Caco-2 (cell line): ENCODE measurements at regions of chr11 and their contacts with region 1.

Region 1: DNA sequence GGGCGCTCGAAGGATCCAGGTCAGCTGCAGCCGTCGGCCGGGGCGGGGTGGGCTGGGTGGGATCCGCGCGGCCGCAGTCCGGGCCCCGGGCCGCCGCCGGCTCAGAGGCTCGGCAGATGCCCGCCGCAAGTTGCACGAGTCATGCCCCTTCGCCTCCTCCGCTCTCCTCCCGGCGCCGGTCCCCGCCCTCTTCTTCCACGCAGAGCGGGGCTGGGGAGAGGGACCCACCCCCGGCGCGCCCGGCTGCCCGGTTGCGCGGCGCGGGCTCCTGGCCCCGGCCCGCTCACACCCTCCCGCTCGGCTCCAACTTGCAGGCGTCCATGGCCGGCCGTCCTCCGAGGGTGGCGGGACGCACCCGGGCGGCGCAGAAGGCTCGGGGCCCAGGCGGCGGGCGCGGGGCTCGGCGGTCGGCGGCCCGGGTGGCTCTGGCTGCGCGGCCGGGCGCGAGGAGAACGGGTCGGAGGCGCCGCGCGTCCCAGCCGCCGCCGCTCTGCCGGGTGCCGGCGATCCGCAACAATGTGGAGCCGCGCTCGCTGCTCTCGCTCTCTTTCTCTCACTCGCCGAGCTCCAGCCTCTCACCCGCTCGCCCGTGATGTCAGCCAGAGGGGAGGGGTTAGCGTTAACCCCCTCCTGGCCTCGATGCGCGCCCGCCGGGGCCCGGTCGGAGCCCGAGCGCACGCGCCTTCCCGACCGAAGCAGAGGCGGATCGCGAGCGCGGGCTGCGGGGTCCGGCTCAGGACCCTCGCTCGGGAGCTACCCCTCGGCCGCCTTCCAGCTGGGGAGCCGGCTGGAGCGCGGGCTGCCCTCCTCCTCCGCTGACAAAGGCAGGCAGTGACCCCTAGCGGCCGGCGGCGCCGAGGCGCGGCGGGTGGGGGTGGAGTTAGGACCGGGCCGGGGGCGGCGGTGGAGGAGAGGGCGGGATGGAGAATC is at the start of gene NECTIN1:
- DNase-seq: peak; percentile 93 to 98
- H3K4me3 ChIP-seq: peak within 1 kb of the TSS; percentile 87
- H3K4me3 Mint-ChIP-seq: peak within 1 kb of the TSS; percentile 89
- H3K27ac Mint-ChIP-seq: peak within 1 kb of the TSS; percentile 15
- H3K4me1 ChIP-seq: peaks cover 25% of the 10 kb centered on the region
- H3K4me1 Mint-ChIP-seq: peaks cover 22% of the 10 kb centered on the region
- H3K27me3 ChIP-seq: no peaks in the 10 kb centered on the region
- H3K27me3 Mint-ChIP-seq: peaks cover 5% of the 10 kb centered on the region
- CTCF ChIP-seq: peak; percentile 99
- total RNA-seq, gene NECTIN1: 60.1 and 63.6 TPM in 2 replicates

Region 2: GRCh38 chr11:119460582-119460981 is 268.3 kb before region 1 on chr11:
- CTCF ChIA-PET with region 1: no interaction called
- POLR2A ChIA-PET with region 1: no interaction called
- intact Hi-C with region 1: no loop called
- DNase-seq: no peak
- H3K4me3 ChIP-seq: no peak overlapping the region
- H3K4me3 Mint-ChIP-seq: no peak overlapping the region
- H3K27ac Mint-ChIP-seq: no peak overlapping the region
- H3K4me1 ChIP-seq: no peaks in the 10 kb centered on the region
- H3K4me1 Mint-ChIP-seq: no peaks in the 10 kb centered on the region
- H3K27me3 ChIP-seq: no peaks in the 10 kb centered on the region
- H3K27me3 Mint-ChIP-seq: peaks cover 21% of the 10 kb centered on the region
- CTCF ChIP-seq: no peak

Region 3: GRCh38 chr11:119666463-119667131 is 62.3 kb before region 1 on chr11:
- CTCF ChIA-PET with region 1: interaction called, 32 read pairs
- POLR2A ChIA-PET with region 1: no interaction called
- intact Hi-C with region 1: loop called (anchors 1 kb)
- DNase-seq: peak; percentile 86 to 94
- H3K4me3 ChIP-seq: no peak overlapping the region
- H3K4me3 Mint-ChIP-seq: no peak overlapping the region
- H3K27ac Mint-ChIP-seq: no peak overlapping the region
- H3K4me1 ChIP-seq: peaks cover 6% of the 10 kb centered on the region; the same call in 1 of the 2 replicates
- H3K4me1 Mint-ChIP-seq: peaks cover 7% of the 10 kb centered on the region
- H3K27me3 ChIP-seq: no peaks in the 10 kb centered on the region
- H3K27me3 Mint-ChIP-seq: no peaks in the 10 kb centered on the region
- CTCF ChIP-seq: peak; percentile 99

Region 4: GRCh38 chr11:119701591-119702549 is 27.0 kb before region 1 on chr11:
- CTCF ChIA-PET with region 1: interaction called, 40 read pairs
- POLR2A ChIA-PET with region 1: no interaction called
- intact Hi-C with region 1: no loop called
- DNase-seq: no peak
- H3K4me3 ChIP-seq: no peak overlapping the region
- H3K4me3 Mint-ChIP-seq: no peak overlapping the region
- H3K27ac Mint-ChIP-seq: no peak overlapping the region
- H3K4me1 ChIP-seq: peaks cover 38% of the 10 kb centered on the region
- H3K4me1 Mint-ChIP-seq: peaks cover 20% of the 10 kb centered on the region
- H3K27me3 ChIP-seq: no peaks in the 10 kb centered on the region
- H3K27me3 Mint-ChIP-seq: no peaks in the 10 kb centered on the region
- CTCF ChIP-seq: no peak

Region 5: GRCh38 chr11:119907878-119908572 is 179.1 kb after region 1 on chr11:
- CTCF ChIA-PET with region 1: interaction called, 10 read pairs
- POLR2A ChIA-PET with region 1: no interaction called
- intact Hi-C with region 1: loop called (anchors 1 kb)
- DNase-seq: no peak
- H3K4me3 ChIP-seq: no peak overlapping the region
- H3K4me3 Mint-ChIP-seq: peak overlapping the region; percentile 64
- H3K27ac Mint-ChIP-seq: peak overlapping the region; percentile 86
- H3K4me1 ChIP-seq: peaks cover 70% of the 10 kb centered on the region
- H3K4me1 Mint-ChIP-seq: peaks cover 79% of the 10 kb centered on the region
- H3K27me3 ChIP-seq: no peaks in the 10 kb centered on the region
- H3K27me3 Mint-ChIP-seq: no peaks in the 10 kb centered on the region
- CTCF ChIP-seq: peak in 1 of 2 experiments; percentile 11

Region 6: DNA sequence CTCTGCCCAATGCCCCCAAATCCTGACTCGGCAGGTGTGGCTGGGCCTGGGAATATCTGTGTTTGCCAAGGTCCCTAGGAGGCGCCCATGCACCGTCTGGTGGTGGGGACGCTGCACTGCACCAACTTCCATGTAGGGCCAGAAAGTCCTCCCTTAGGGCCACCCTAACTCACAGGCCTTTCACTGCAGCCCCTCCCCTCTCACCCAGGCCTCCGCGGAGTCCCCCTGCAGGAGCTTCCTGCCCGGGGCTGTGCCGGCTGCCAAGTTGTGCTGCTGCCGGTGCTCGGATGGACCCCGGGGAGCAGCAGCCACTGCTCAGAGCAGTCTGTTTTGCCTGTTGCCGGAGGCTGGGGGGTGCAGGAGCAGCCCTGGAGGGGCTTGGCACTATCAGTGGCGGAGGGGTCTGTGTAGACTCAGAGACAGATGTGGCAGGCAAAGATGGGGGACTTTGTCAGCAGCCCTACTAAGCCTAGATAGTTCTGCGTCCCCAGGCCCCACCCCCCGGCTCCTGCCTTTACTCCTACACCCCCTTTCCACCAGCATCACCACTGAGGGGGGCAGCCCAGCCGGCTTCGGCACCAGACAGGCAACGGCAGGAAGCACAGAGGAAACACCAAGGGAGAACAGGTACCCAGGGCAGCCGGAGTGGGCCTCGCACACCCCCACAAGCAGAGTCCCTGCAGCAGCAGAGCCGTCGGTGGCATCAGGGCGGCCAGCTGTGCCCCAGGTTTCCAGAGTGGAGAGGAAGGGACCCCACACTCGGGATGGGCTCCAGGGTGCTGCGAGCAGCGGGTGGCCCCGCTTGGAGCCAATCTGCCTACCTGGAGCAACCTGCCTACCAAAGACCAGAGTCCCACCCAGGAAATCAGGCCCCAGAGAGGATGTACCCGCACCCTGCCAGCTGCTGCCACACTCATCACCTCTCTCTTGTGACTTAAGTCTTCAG is 284.7 kb after region 1 on chr11:
- CTCF ChIA-PET with region 1: interaction called, 3 read pairs
- POLR2A ChIA-PET with region 1: no interaction called
- intact Hi-C with region 1: loop called (anchors 1 kb)
- DNase-seq: peak; percentile 72 to 74
- H3K4me3 ChIP-seq: no peak overlapping the region
- H3K4me3 Mint-ChIP-seq: no peak overlapping the region
- H3K27ac Mint-ChIP-seq: no peak overlapping the region
- H3K4me1 ChIP-seq: peaks cover 7% of the 10 kb centered on the region
- H3K4me1 Mint-ChIP-seq: peaks cover 12% of the 10 kb centered on the region
- H3K27me3 ChIP-seq: peaks cover 3% of the 10 kb centered on the region
- H3K27me3 Mint-ChIP-seq: peaks cover 21% of the 10 kb centered on the region
- CTCF ChIP-seq: peak; percentile 89 to 96